ENCODE measurements at regions of chr2 and their contacts with region 1.

Region 1: GRCh38 chr2:161063157-161063954 is 96.9 kb upstream of the TANK start:
- DNase-seq: peak; percentile 56 to 74
- ATAC-seq: peak; percentile 94 to 98
- H3K4me3 ChIP-seq: no peak overlapping the region
- H3K27ac ChIP-seq: peak overlapping the region in 1 of 2 experiments; percentile 67; a peak in 3 of 6 replicates
- H3K4me1 ChIP-seq: peaks cover 6% of the 10 kb centered on the region; the same call in 2 of the 3 replicates
- CTCF ChIP-seq: peak; percentile 87
- EP300 ChIP-seq: no peak
- POLR2A ChIP-seq: no peak
- RAD21 ChIP-seq: peak; percentile 87 to 91

Region 2: DNA sequence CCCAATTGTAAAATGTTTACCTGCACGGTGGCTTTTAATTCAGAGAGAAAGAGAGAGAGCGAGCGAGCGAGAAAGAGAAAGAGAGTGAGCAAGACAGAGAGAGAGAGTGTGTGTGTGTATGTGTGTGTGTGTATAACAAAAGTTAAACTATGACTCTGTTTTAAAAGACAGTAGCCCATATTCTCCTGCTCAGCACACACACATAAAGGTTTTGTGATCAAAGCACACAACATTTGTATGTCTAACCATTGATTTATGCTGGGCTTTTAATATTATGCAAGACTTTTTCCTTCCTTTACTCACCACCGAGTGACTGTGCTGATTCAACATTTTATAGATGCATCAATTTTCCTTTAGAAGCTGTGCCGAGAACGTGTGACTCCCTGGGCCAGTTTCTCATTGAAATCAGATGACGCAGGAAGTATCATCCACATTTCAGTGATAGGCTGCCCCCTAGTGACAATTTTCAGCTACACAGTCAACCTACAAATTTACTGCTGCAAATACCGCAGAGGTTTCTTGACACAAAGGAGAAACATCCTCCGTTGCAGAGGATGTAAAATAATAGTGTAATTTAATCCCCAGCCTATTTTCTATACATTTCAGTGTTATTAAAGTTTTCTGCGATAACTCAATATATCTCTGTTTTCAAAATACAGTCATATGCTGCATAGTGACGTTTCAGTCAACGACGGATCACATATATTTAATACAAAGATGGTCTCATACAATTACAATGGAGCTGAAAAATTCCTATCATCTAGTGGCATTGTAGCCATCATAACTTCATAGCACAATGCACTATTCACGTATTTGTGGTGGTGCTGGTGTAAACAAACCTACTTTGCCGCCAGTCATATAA is 69.0 kb before region 1 on chr2:
- CTCF ChIA-PET with region 1: interaction called, 18 read pairs
- POLR2A ChIA-PET with region 1: no interaction called
- DNase-seq: peak; percentile 40 to 79
- ATAC-seq: peak; percentile 92 to 97
- H3K4me3 ChIP-seq: no peak overlapping the region
- H3K27ac ChIP-seq: peak overlapping the region; percentile 9 to 73; a peak in 4 of 6 replicates
- H3K4me1 ChIP-seq: peaks cover 3% of the 10 kb centered on the region; the same call in 1 of the 3 replicates
- CTCF ChIP-seq: peak; percentile 89
- EP300 ChIP-seq: no peak
- POLR2A ChIP-seq: no peak
- RAD21 ChIP-seq: peak; percentile 93 to 96

Region 3: DNA sequence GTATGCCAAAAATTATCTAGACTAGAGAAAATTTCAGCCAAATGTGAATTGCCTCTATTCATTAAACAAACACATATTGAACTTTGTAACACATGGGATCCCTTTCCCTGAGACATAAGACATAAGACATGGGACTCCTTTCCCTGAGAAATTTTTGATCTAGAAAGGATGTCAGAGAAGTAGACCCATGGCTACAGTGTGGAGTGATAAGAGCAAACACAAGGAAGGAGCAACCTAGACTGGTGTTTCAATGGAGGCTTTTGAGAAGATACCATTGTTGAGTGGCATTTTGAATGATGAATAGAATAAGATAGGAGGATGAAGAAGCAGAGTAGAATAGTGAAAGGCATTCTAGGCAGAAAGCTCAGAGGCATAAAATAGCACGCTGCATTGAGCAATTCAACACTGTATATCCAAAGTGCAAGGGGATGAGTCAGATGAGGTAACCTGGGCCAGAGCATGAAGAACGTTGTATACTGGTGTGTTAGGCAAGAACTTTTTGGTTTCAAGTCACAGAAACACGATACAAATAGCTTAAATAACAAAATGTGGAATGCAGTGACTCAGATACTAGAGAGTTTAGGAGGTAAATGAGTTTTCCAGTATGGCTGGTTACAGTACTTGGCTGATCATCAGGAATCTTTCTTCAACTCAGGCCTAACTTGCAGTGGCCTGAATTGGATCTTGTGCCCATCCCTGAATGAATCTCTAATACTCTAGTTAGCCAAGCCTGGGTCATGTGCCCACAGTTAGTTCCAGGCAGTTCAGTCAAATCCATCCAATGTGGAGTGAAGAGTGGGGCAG is 32.9 kb before region 1 on chr2:
- CTCF ChIA-PET with region 1: interaction called, 11 read pairs
- POLR2A ChIA-PET with region 1: no interaction called
- DNase-seq: peak; percentile 15 to 62
- ATAC-seq: peak; percentile 95 to 98
- H3K4me3 ChIP-seq: no peak overlapping the region
- H3K27ac ChIP-seq: peak overlapping the region; percentile 53 to 73
- H3K4me1 ChIP-seq: peaks cover 14% of the 10 kb centered on the region
- CTCF ChIP-seq: no peak
- EP300 ChIP-seq: no peak
- POLR2A ChIP-seq: no peak
- RAD21 ChIP-seq: no peak

Region 4: GRCh38 chr2:161046876-161047275 is 16.5 kb before region 1 on chr2:
- CTCF ChIA-PET with region 1: interaction called, 11 read pairs
- POLR2A ChIA-PET with region 1: no interaction called
- DNase-seq: no peak
- ATAC-seq: no peak
- H3K4me3 ChIP-seq: no peak overlapping the region
- H3K27ac ChIP-seq: no peak overlapping the region
- H3K4me1 ChIP-seq: peaks cover 9% of the 10 kb centered on the region; the same call in 1 of the 3 replicates
- CTCF ChIP-seq: no peak
- EP300 ChIP-seq: no peak
- POLR2A ChIP-seq: no peak
- RAD21 ChIP-seq: no peak

Region 5: DNA sequence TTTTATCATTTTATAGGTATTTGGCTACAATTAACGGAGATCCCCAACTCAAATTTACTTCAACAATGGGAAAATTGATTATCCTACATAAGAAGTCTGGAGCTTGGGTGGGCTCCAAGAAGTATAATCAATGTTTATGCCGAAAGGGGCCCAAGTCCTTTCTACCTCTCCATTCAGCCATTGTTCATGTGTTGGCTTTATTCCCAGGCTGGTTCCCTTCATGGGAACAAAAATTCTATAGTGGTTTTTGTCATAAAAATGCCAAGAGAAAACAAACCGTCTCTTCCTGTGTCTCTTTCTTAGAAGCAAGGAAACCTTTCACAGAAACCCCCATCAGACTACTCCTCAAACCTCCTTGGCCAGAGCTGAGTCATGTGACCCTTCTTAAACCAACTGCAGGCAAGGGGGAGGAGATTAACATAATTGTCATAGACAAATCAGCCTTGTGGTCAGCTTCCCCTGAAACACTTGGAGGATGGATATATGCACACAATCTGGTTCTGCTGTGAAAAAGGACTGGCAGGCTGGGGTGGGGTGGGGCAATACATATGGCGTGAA is 21.8 kb after region 1 on chr2:
- CTCF ChIA-PET with region 1: interaction called, 33 read pairs
- POLR2A ChIA-PET with region 1: no interaction called
- DNase-seq: no peak
- ATAC-seq: no peak
- H3K4me3 ChIP-seq: no peak overlapping the region
- H3K27ac ChIP-seq: no peak overlapping the region
- H3K4me1 ChIP-seq: no peaks in the 10 kb centered on the region
- CTCF ChIP-seq: no peak
- EP300 ChIP-seq: no peak
- POLR2A ChIP-seq: no peak
- RAD21 ChIP-seq: no peak

Measured in A549 (cell line).